ENCODE measurements at regions of chr1 and their contacts with region 1.

Region 1: GRCh38 chr1:170692866-170693575 is 29.1 kb downstream of the PRRX1 start:
- DNase-seq: no peak
- H3K4me3 ChIP-seq: no peak overlapping the region
- H3K27ac ChIP-seq: no peak overlapping the region
- H3K4me1 ChIP-seq: no peaks in the 10 kb centered on the region
- CTCF ChIP-seq: no peak

Region 2: DNA sequence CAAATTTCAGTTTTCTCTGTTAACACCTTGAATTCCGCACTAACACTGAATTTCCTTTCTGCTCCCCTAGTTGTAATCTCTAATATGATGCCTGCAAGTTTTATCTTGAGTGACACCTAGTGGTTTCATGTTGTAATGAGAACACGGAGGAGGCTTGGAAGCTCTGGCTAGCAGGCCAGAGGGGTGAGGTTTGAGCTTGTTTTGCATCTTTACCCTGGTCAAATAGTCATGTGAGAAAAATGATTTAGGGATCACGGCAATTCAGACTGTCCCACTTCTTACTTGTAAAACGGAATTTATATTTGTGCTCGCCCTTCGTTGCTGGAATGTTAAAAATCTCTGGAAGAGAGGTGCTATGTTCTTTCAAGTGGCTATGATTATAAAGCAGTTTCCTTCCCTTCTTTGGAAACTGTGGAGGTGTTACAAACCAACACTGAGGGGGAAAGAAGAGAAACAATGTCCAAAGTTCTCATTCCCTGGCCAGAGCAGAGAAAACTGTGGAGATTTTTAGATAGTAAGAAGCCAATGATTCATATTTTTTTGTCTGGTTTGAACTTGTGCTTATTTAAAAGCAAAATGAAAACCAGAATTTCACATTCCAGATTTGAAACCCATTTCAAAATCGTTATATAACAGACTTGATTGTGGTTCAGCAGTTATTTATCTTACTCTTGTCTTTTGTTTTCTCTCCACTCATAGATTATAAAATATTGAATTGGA is 237.0 kb after region 1 on chr1:
- CTCF ChIA-PET with region 1: no interaction called
- POLR2A ChIA-PET with region 1: no interaction called
- intact Hi-C with region 1: loop called (anchors 5 kb)
- DNase-seq: peak; percentile 67
- H3K4me3 ChIP-seq: no peak overlapping the region
- H3K27ac ChIP-seq: no peak overlapping the region
- H3K4me1 ChIP-seq: peaks cover 12% of the 10 kb centered on the region
- CTCF ChIP-seq: peak; percentile 91